Dendritic cell treated with granulocyte-macrophage colony-stimulating factor and Interleukin-4, amounts not matched to agents 40 ng/mL and 50 ng/mL, for 4 days (primary cell): ENCODE measurements at regions of chr3 and their contacts with region 1.

Region 1: GRCh38 chr3:101849051-101849720 is at the start of gene NFKBIZ:
- H3K4me3 Mint-ChIP-seq: peak within 1 kb of the TSS; percentile 91
- H3K27ac Mint-ChIP-seq: peak within 1 kb of the TSS; percentile 98
- H3K4me1 Mint-ChIP-seq: peaks cover 42% of the 10 kb centered on the region
- H3K27me3 Mint-ChIP-seq: no peaks in the 10 kb centered on the region

Region 2: GRCh38 chr3:101819758-101820157 is 29.4 kb before region 1 on chr3:
- intact Hi-C with region 1: loop called (anchors 5 kb)
- H3K4me3 Mint-ChIP-seq: no peak overlapping the region
- H3K27ac Mint-ChIP-seq: no peak overlapping the region
- H3K4me1 Mint-ChIP-seq: peaks cover 34% of the 10 kb centered on the region
- H3K27me3 Mint-ChIP-seq: no peaks in the 10 kb centered on the region

Region 3: DNA sequence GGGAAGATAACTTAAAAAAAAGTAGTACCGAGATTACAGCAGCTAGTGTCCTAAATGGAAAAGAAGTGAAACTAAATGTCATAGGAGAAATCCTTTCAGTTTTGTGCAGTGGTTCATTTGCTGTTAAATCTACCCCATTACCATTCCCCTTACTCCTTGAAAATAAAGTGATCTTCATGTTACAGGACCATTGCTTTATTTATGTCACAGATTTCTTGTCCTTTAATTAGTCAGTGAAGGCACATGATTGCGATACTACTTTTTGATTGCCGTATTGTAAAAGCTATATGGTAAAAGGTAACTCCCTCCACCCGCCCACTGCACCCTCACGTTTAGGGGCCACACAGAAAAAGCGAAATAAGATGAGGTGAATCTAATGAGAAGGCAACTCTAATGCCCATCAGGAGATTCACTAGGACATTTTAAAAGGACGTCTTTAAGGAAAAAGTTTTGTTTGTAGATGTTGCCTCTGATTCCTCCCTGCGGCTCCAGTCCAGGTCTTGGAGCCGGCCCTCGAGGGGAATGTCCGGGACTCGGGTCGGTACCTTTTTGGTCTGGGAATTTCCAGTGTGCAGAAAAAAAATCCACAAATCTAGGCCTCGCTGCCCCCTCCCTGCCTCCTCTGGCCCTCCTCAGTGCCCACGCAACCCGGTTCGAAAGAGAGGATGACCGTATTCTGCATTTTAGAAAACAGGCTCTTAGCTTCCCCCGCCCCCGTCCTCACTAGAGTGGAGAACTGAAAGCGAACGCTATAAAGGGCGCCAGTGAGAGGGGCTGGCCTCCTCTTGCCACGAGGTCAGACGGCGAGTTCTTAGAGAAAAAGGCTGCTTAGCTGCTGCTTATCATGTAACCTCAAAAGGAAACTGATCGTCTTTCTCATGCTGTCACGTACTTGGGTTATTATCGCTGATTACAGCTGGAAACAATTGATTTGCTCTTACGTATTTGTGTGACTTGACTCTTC is 21.7 kb before region 1 on chr3:
- intact Hi-C with region 1: loop called (anchors 2 kb)
- H3K4me3 Mint-ChIP-seq: peak overlapping the region; percentile 85
- H3K27ac Mint-ChIP-seq: peak overlapping the region; percentile 94
- H3K4me1 Mint-ChIP-seq: peaks cover 39% of the 10 kb centered on the region
- H3K27me3 Mint-ChIP-seq: no peaks in the 10 kb centered on the region

Region 4: DNA sequence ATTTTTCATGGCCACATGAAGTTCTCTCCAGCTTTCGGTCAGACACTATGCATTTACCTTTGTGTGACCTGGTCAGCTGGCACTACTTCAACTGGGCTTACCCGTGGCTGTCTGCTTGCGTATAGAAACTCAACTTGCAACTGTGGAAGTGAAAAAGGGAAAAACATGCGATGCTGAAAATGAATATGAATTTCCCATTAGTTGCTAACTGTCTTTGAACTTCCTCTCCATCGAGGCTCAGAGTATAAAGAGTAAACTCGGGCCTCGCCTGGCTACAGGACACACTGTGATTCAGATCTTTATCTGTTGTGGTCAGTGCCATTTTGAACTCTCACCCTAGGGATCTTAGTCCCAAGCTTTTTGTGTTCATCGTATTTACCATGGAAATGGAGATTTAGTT is 27.0 kb after region 1 on chr3:
- intact Hi-C with region 1: no loop called
- H3K4me3 Mint-ChIP-seq: no peak overlapping the region
- H3K27ac Mint-ChIP-seq: no peak overlapping the region
- H3K4me1 Mint-ChIP-seq: peaks cover 38% of the 10 kb centered on the region
- H3K27me3 Mint-ChIP-seq: peaks cover 2% of the 10 kb centered on the region

Region 5: DNA sequence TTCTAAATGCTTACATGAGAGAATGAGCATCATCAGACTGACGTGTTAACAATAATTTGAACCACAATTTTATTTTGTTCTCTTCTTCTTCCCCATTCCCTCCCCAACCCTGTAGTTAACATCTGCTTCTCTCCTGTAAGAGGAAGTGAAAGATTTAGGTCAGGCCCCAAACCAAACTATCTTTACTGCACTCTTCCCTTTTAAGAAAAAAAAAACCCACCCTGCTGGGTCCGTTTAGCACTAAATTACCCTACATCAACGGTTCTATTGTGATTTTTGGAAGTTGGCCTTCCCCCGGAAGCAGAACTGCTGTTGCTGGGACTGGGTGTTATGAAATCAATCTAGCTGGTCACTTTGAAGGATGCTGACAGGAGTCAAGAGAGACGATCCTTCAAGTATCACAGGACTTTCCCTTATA is 49.6 kb after region 1 on chr3:
- intact Hi-C with region 1: loop called (anchors 2 kb)
- H3K4me3 Mint-ChIP-seq: no peak overlapping the region
- H3K27ac Mint-ChIP-seq: peak overlapping the region; percentile 32
- H3K4me1 Mint-ChIP-seq: peaks cover 15% of the 10 kb centered on the region
- H3K27me3 Mint-ChIP-seq: peaks cover under 1% of the 10 kb centered on the region

Region 6: DNA sequence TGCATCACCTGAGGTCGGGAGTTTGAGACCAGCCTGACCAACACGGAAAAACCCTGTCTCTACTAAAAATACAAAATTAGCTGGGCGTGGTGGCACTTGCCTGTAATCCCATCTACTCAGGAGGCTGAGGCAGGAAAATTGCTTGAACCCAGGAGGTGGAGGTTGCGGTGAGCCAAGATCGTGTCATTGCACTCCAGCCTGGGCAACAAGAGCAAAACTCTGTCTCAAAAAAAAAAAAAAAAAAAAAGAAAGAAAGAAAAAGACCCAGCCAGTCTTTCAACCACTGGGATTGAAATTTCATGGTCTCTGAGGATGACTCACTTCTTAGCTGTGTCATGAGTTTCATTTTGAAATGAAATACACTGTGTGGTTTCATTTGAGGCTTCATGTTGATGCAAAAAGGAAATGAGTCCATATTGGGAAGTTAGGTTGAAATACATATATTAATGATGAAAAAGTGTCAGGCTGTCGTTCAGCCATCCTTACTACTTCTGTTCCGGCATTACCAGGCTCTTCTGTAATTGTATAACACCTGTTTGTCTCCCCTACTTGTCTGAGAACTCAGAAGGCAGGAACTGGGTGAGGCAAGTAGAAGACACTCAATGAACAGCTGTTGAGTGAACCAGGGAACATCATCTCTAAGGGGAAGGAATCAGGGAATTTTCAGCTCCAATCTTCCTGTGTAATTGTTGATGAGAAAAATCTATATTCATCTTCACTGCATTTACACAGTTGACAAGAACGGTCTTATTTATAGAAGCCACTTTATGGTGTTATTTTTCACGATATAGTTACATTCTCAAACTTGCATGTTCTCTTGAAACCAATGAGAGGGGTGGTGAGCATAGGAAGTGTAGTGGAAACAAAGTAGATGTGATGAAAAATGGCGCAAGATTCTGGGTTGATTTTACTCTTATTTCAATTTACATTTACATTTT is 87.5 kb after region 1 on chr3:
- intact Hi-C with region 1: loop called (anchors 5 kb)
- H3K4me3 Mint-ChIP-seq: no peak overlapping the region
- H3K27ac Mint-ChIP-seq: peak overlapping the region; percentile 61
- H3K4me1 Mint-ChIP-seq: peaks cover 34% of the 10 kb centered on the region
- H3K27me3 Mint-ChIP-seq: peaks cover 11% of the 10 kb centered on the region

Region 7: DNA sequence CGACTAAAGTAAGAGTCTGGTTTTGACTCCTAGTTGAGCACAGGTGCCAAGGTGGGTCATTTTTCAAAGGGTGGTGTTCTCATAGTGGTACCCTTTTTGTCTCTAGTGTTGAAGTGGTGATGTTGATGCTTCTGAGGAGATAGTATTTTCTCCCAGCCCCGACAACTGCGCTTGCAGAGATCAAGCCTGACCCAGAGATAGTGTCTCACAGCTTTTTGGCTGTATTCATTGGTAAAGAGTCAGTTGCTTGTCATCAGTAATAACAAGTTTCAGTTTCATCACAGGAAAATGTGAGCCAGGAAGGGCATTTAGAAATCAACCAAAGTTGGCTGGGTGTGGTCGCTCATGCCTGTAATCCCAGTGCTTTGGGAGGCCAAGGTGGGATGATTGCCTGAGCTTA is 139.4 kb after region 1 on chr3:
- intact Hi-C with region 1: no loop called
- H3K4me3 Mint-ChIP-seq: no peak overlapping the region
- H3K27ac Mint-ChIP-seq: peak overlapping the region; percentile 59
- H3K4me1 Mint-ChIP-seq: peaks cover 27% of the 10 kb centered on the region
- H3K27me3 Mint-ChIP-seq: peaks cover 2% of the 10 kb centered on the region